Activated B cell treated with CpG ODN at 0.5 μM for 24 hours (primary cell): ENCODE measurements at regions of chr19 and their contacts with region 1.

Region 1: DNA sequence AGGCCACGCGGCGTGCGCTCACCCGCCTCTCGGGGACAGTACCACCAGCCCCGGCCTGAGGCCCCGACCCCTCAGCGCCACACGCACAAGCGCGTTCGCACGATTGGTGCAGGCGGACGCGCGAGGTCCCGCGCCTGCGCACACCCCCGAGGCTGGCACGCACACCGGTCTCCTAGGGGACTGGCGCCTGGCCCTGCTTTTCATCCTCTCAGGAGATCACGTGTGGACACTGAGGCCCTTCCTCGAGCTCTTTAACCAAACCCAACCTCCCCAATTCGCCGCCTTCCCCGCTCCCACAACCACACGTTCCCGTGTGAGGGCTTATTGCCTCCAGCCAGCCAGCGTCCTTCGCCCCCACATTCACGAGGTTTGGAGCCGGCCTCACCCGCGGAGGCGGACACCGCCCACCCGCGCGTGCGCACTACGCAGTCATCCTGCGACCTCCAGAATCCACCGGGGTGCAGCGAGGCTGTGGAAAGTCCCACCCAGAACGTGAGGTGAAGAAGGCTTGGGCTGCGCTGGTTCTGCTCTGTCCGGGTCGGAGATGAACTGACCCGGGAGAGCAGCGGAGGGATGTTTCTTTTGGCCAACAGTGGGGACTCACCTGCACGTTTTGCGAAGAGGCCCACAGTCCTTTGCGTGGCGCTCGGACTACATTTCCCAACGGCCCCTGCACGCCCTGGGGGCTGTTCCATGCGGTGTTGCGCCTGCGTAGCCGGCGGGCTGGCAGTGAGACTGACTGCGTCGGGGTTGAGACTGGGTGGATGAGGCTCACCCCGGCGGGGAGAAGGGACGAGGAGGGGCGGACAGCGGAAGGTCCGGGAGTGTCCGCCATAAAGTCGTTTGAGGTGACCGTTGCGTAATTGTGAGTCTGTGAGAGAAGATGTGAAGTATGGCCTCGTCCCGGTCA is 539 bp upstream of the ZNF667 start:
- DNase-seq: peak; percentile 73
- ATAC-seq: peak; percentile 80
- H3K4me3 Mint-ChIP-seq: peak overlapping the region; percentile 96
- H3K27ac Mint-ChIP-seq: peak overlapping the region; percentile 96
- H3K4me1 Mint-ChIP-seq: peaks cover 19% of the 10 kb centered on the region
- H3K27me3 Mint-ChIP-seq: peaks cover 8% of the 10 kb centered on the region
- CTCF ChIP-seq: no peak

Region 2: GRCh38 chr19:56301182-56301581 is 176.5 kb before region 1 on chr19:
- CTCF ChIA-PET with region 1: no interaction called
- POLR2A ChIA-PET with region 1: no interaction called
- intact Hi-C with region 1: no loop called
- DNase-seq: no peak
- ATAC-seq: no peak
- H3K4me3 Mint-ChIP-seq: no peak overlapping the region
- H3K27ac Mint-ChIP-seq: no peak overlapping the region
- H3K4me1 Mint-ChIP-seq: peaks cover 3% of the 10 kb centered on the region
- H3K27me3 Mint-ChIP-seq: no peaks in the 10 kb centered on the region
- CTCF ChIP-seq: no peak

Region 3: GRCh38 chr19:56441206-56441792 is 36.4 kb before region 1 on chr19:
- CTCF ChIA-PET with region 1: no interaction called
- POLR2A ChIA-PET with region 1: no interaction called
- intact Hi-C with region 1: no loop called
- DNase-seq: no peak
- ATAC-seq: no peak
- H3K4me3 Mint-ChIP-seq: no peak overlapping the region
- H3K27ac Mint-ChIP-seq: no peak overlapping the region
- H3K4me1 Mint-ChIP-seq: no peaks in the 10 kb centered on the region
- H3K27me3 Mint-ChIP-seq: no peaks in the 10 kb centered on the region
- CTCF ChIP-seq: no peak

Region 4: DNA sequence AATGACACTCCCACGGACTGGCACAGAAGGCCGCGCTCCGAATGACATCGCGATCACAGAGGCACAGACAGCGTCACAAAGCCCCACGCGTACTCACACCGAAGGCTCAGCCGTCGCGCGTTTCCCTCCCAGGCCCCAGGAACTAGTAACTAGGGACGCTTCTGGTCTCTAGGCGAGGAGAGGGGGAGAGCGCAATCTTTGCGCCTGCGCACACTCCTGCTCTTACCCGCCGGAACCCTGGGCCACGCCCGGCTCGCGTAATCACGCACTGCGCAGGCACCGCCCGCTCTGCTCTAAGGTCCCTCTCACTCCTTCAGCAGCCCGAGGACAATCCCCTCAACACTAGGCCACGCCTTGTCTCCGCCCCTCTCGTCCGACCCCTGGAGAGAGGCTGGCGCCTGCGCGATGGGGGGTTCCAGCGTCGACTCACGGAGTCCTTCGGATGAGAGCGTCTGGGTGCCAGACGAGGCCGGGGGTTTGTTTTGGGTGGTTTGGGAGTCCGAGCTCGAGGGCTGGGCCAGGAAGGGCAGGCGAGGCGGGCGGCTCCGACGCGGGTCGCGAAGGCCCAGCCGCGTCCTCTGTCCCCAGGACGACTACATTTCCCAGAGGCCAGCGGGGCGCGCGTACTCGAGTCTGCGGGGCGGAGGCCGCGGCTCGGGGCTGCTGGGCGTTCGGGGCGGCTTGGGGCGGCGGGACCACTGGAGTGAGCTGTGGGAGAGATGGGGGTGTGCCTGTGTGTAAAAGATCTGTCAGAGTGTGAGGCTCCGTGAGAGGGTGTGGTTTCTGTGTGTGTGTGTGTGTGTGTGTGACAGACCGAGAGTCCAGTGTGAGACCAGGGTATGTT is 30.0 kb after region 1 on chr19 and contains the start of gene ZNF471:
- CTCF ChIA-PET with region 1: no interaction called
- POLR2A ChIA-PET with region 1: no interaction called
- intact Hi-C with region 1: loop called (anchors 1 kb)
- DNase-seq: peak; percentile 81
- ATAC-seq: peak; percentile 99
- H3K4me3 Mint-ChIP-seq: no peak within 1 kb of the TSS
- H3K27ac Mint-ChIP-seq: no peak within 1 kb of the TSS
- H3K4me1 Mint-ChIP-seq: peaks cover 9% of the 10 kb centered on the region
- H3K27me3 Mint-ChIP-seq: no peaks in the 10 kb centered on the region
- CTCF ChIP-seq: no peak
- total RNA-seq, gene ZNF471: 1.8 and 2.1 TPM in 2 replicates

Region 5: DNA sequence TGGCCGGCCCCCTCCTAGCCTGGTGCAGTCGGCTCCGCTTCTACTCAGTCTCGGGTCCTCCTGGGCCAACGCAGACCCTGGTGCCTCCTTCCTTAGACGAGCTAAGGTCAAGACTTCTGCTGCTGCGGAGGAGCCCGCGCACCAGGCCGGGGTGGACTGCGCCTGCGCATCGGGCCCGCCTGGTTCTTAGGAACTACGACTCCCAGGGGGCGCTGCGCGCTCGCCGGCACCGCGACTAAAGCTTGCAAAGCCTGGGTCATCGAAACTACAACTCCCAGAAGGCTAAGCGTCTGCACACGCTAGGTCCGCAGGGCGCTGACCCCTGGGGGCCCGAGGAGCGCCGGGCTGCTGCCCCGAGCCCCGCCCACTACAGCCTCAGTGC is 193.9 kb after region 1 on chr19 and contains the start of gene ZNF835:
- CTCF ChIA-PET with region 1: no interaction called
- POLR2A ChIA-PET with region 1: no interaction called
- intact Hi-C with region 1: loop called (anchors 5 kb)
- DNase-seq: peak; percentile 91
- ATAC-seq: peak; percentile 98
- H3K4me3 Mint-ChIP-seq: peak within 1 kb of the TSS; percentile 94
- H3K27ac Mint-ChIP-seq: peak within 1 kb of the TSS; percentile 84
- H3K4me1 Mint-ChIP-seq: peaks cover 16% of the 10 kb centered on the region
- H3K27me3 Mint-ChIP-seq: no peaks in the 10 kb centered on the region
- CTCF ChIP-seq: no peak
- total RNA-seq, gene ZNF835: 5.5 and 5.7 TPM in 2 replicates